Gastrocnemius medialis (tissue), 4 donors: ENCODE measurements at regions of chr4 and their contacts with region 1.

Region 1: GRCh38 chr4:151325111-151325948 is at the start of gene SH3D19:
- DNase-seq: peak; percentile 40 to 51
- ATAC-seq: peak; percentile 68 to 69
- H3K4me3 ChIP-seq: peak within 1 kb of the TSS; percentile 72 to 96 (median 76)
- H3K27ac ChIP-seq: peak within 1 kb of the TSS; percentile 84 to 94 (median 86)
- H3K4me1 ChIP-seq: peaks cover 25 to 34% of the 10 kb centered on the region in 2 donors
- H3K27me3 ChIP-seq: no peaks in the 10 kb centered on the region
- CTCF ChIP-seq: peak in 1 of 5 experiments; percentile 23
- POLR2A ChIP-seq: peak; percentile 38 to 54
- total RNA-seq, gene SH3D19: 35.6 to 73.1 (median 50.5) TPM

Region 2: DNA sequence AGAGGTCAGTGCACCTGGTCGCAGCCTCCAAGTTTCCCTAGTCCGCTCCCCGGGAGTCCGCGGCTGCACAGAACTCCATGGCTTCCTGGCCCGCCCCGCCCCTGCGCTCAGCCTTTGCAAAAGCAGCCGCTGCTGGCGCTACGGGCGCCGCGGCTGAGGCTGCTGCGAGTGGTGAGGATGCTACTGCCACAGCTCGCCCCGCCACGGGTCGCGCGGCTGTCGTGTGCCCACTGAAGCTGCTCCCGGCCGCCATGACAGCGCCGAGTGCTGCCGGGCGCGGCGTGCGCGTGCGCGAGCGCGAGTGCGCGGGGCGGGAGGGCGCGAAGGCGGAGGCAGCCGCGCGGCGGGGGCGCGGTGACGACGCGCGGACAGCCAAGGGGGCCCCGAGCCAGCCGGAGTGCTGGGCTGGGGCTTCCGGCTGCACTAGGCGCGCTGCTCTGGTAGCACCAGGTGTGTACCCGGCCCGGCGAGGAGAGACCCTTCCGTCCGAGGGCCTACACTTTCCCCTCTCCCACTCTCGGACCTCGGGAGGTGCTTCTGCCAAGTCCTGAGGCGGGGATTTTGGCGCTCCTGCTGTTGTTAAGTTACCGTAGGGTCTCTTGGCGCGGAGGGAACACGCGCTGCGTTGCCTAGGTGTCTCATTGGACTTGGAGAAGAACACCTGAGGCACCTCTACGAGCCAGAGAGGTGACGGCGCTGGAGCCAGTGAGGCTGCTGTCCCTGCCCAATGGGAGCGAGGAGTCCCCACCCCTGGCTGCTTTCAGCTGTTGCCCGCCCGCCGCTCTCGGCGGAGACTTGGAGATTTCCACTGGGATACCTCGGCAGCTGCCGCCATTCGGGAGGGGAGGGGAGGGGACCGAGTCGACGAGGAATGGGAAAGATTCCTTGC is 309.6 kb before region 1 on chr4:
- in situ Hi-C with region 1: no loop called
- intact Hi-C with region 1: loop called (anchors 10 kb)
- DNase-seq: peak; percentile 27 to 62
- ATAC-seq: peak; percentile 85 to 86
- H3K4me3 ChIP-seq: peak overlapping the region; percentile 81 to 97 (median 93)
- H3K27ac ChIP-seq: peak overlapping the region; percentile 83 to 89 (median 86)
- H3K4me1 ChIP-seq: peaks cover 18% of the 10 kb centered on the region in 2 donors
- H3K27me3 ChIP-seq: no peaks in the 10 kb centered on the region
- CTCF ChIP-seq: no peak
- POLR2A ChIP-seq: peak; percentile 58 to 59

Region 3: DNA sequence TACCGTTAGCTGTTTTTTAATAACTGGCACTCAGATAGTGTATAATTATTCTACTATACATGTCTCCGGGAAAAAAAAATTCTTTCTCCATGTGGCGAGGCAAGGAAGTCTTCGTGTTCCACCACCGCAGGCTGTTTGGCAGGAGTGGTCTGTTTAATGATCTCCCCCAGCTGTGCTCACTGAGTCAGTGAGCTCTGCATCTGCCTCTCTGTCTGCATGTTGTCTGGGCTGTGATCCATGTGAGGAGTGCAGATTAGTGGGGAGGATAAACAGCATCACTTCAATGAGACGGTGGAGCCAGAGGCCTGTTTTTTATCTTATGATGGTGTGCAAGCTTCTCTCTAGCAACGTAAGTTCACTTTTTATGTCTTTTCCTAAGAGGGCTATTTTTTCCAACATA is 156.1 kb before region 1 on chr4:
- in situ Hi-C with region 1: no loop called
- intact Hi-C with region 1: loop called (anchors 10 kb)
- DNase-seq: peak; percentile 43 to 62
- ATAC-seq: peak; percentile 62 to 75
- H3K4me3 ChIP-seq: no peak overlapping the region
- H3K27ac ChIP-seq: peak overlapping the region in 3 of 4 donors; percentile 33 to 48 (median 35)
- H3K4me1 ChIP-seq: peaks cover 4 to 17% of the 10 kb centered on the region in 2 donors
- H3K27me3 ChIP-seq: no peaks in the 10 kb centered on the region
- CTCF ChIP-seq: no peak
- POLR2A ChIP-seq: no peak